ENCODE measurements at regions of chr18 and their contacts with region 1.

Region 1: GRCh38 chr18:70598406-70598805 is 309.6 kb downstream of the SOCS6 start:
- DNase-seq: no peak
- ATAC-seq: no peak
- H3K4me3 ChIP-seq: no peak overlapping the region
- H3K4me3 Mint-ChIP-seq: no peak overlapping the region
- H3K27ac ChIP-seq: no peak overlapping the region
- H3K27ac Mint-ChIP-seq: peak overlapping the region in 6 of 9 donors; percentile 56 to 92 (median 84)
- H3K4me1 ChIP-seq: peaks cover 0 to 5% of the 10 kb centered on the region in 2 donors
- H3K4me1 Mint-ChIP-seq: peaks cover 0 to 33% (median 17%) of the 10 kb centered on the region in 7 donors
- H3K27me3 ChIP-seq: no peaks in the 10 kb centered on the region
- H3K27me3 Mint-ChIP-seq: no peaks in the 10 kb centered on the region

Region 2: DNA sequence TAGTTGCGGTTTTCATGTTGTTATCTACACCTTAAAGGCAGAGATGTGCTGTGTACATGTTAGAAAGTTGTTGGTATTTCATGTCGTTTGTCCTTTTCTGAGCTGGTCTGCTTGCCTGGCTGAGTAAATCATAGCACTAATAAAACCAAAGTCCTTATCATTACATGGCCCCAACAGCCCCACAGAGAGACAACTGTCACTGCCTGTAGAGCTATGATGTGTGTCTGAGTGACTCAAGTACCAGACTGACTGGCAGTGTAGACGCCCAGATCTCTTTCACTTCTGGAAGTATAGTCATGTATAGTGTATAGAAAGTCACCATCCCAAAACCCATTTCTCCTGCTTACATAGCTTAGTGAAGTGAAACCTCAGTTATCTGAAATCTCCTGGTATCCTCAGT is 305.2 kb before region 1 on chr18:
- CTCF ChIA-PET with region 1: no interaction called
- POLR2A ChIA-PET with region 1: no interaction called
- intact Hi-C with region 1: no loop called
- DNase-seq: no peak
- ATAC-seq: no peak
- H3K4me3 ChIP-seq: no peak overlapping the region
- H3K4me3 Mint-ChIP-seq: peak overlapping the region in 1 of 10 donors; percentile 10
- H3K27ac ChIP-seq: no peak overlapping the region
- H3K27ac Mint-ChIP-seq: no peak overlapping the region
- H3K4me1 ChIP-seq: no peaks in the 10 kb centered on the region
- H3K4me1 Mint-ChIP-seq: peaks cover 10 to 27% (median 25%) of the 10 kb centered on the region in 7 donors
- H3K27me3 ChIP-seq: no peaks in the 10 kb centered on the region
- H3K27me3 Mint-ChIP-seq: peaks cover 13 to 44% (median 23%) of the 10 kb centered on the region in 5 donors

Region 3: GRCh38 chr18:70659036-70659925 is 60.9 kb after region 1 on chr18:
- CTCF ChIA-PET with region 1: no interaction called
- POLR2A ChIA-PET with region 1: interaction called, 7 read pairs
- intact Hi-C with region 1: loop called in 1 of 2 experiments (anchors 1 kb)
- DNase-seq: peak in 8 of 9 donors; percentile 13 to 88 (median 86)
- ATAC-seq: peak; percentile 97
- H3K4me3 ChIP-seq: no peak overlapping the region
- H3K4me3 Mint-ChIP-seq: peak overlapping the region in 9 of 10 donors; percentile 43 to 80 (median 71)
- H3K27ac ChIP-seq: peak overlapping the region; percentile 77
- H3K27ac Mint-ChIP-seq: peak overlapping the region in 8 of 9 donors; percentile 93 to 99 (median 97)
- H3K4me1 ChIP-seq: peaks cover 0 to 62% of the 10 kb centered on the region in 2 donors
- H3K4me1 Mint-ChIP-seq: peaks cover 17 to 82% (median 66%) of the 10 kb centered on the region in 7 donors
- H3K27me3 ChIP-seq: no peaks in the 10 kb centered on the region
- H3K27me3 Mint-ChIP-seq: no peaks in the 10 kb centered on the region

Region 4: GRCh38 chr18:70683263-70683662 is 84.9 kb after region 1 on chr18:
- CTCF ChIA-PET with region 1: no interaction called
- POLR2A ChIA-PET with region 1: no interaction called
- intact Hi-C with region 1: loop called in 1 of 2 experiments (anchors 1 kb)
- DNase-seq: peak in 7 of 9 donors; percentile 39 to 78 (median 70)
- ATAC-seq: peak; percentile 94
- H3K4me3 ChIP-seq: no peak overlapping the region
- H3K4me3 Mint-ChIP-seq: peak overlapping the region in 9 of 10 donors; percentile 6 to 65 (median 30)
- H3K27ac ChIP-seq: peak overlapping the region; percentile 65
- H3K27ac Mint-ChIP-seq: peak overlapping the region in 8 of 9 donors; percentile 80 to 97 (median 89)
- H3K4me1 ChIP-seq: peaks cover 0 to 15% of the 10 kb centered on the region in 2 donors
- H3K4me1 Mint-ChIP-seq: peaks cover 4 to 37% (median 30%) of the 10 kb centered on the region in 7 donors
- H3K27me3 ChIP-seq: no peaks in the 10 kb centered on the region
- H3K27me3 Mint-ChIP-seq: no peaks in the 10 kb centered on the region

Region 5: DNA sequence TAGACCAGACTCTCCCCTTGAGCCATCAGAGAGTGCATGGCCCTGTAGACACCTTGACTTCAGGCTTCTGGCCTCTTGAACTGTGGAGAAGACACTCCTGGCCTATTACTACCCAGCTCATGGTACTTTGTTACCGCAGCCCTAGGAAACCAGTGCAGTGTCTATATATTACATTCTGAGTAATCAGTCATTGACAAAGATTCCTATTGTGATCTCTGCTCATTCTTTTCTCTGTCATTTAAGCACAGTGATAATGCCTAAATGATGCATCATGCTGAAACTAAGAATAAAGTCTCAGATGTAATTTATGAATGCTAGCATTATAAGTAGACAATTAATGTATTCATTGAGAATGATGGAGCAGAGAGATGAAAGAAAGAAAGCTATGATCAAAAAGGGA is 294.0 kb after region 1 on chr18:
- CTCF ChIA-PET with region 1: no interaction called
- POLR2A ChIA-PET with region 1: no interaction called
- intact Hi-C with region 1: loop called in 1 of 2 experiments (anchors 1 kb)
- DNase-seq: no peak
- ATAC-seq: no peak
- H3K4me3 ChIP-seq: no peak overlapping the region
- H3K4me3 Mint-ChIP-seq: no peak overlapping the region
- H3K27ac ChIP-seq: no peak overlapping the region
- H3K27ac Mint-ChIP-seq: no peak overlapping the region
- H3K4me1 ChIP-seq: no peaks in the 10 kb centered on the region
- H3K4me1 Mint-ChIP-seq: no peaks in the 10 kb centered on the region
- H3K27me3 ChIP-seq: no peaks in the 10 kb centered on the region
- H3K27me3 Mint-ChIP-seq: no peaks in the 10 kb centered on the region

Region 6: GRCh38 chr18:71011389-71011788 is 413.0 kb after region 1 on chr18:
- CTCF ChIA-PET with region 1: no interaction called
- POLR2A ChIA-PET with region 1: no interaction called
- intact Hi-C with region 1: loop called in 1 of 2 experiments (anchors 10 kb)
- DNase-seq: no peak
- ATAC-seq: no peak
- H3K4me3 ChIP-seq: no peak overlapping the region
- H3K4me3 Mint-ChIP-seq: no peak overlapping the region
- H3K27ac ChIP-seq: no peak overlapping the region
- H3K27ac Mint-ChIP-seq: no peak overlapping the region
- H3K4me1 ChIP-seq: no peaks in the 10 kb centered on the region
- H3K4me1 Mint-ChIP-seq: peaks cover 0 to 2% (median 0%) of the 10 kb centered on the region in 7 donors
- H3K27me3 ChIP-seq: no peaks in the 10 kb centered on the region
- H3K27me3 Mint-ChIP-seq: no peaks in the 10 kb centered on the region

Region 7: GRCh38 chr18:71336576-71337210 is 738.3 kb after region 1 on chr18:
- CTCF ChIA-PET with region 1: no interaction called
- POLR2A ChIA-PET with region 1: no interaction called
- intact Hi-C with region 1: no loop called
- DNase-seq: no peak
- ATAC-seq: no peak
- H3K4me3 ChIP-seq: no peak overlapping the region
- H3K4me3 Mint-ChIP-seq: no peak overlapping the region
- H3K27ac ChIP-seq: no peak overlapping the region
- H3K27ac Mint-ChIP-seq: no peak overlapping the region
- H3K4me1 ChIP-seq: no peaks in the 10 kb centered on the region
- H3K4me1 Mint-ChIP-seq: peaks cover 0 to 5% (median 0%) of the 10 kb centered on the region in 7 donors
- H3K27me3 ChIP-seq: no peaks in the 10 kb centered on the region
- H3K27me3 Mint-ChIP-seq: no peaks in the 10 kb centered on the region